ENCODE measurements at regions of chr5 and their contacts with region 1.

Region 1: DNA sequence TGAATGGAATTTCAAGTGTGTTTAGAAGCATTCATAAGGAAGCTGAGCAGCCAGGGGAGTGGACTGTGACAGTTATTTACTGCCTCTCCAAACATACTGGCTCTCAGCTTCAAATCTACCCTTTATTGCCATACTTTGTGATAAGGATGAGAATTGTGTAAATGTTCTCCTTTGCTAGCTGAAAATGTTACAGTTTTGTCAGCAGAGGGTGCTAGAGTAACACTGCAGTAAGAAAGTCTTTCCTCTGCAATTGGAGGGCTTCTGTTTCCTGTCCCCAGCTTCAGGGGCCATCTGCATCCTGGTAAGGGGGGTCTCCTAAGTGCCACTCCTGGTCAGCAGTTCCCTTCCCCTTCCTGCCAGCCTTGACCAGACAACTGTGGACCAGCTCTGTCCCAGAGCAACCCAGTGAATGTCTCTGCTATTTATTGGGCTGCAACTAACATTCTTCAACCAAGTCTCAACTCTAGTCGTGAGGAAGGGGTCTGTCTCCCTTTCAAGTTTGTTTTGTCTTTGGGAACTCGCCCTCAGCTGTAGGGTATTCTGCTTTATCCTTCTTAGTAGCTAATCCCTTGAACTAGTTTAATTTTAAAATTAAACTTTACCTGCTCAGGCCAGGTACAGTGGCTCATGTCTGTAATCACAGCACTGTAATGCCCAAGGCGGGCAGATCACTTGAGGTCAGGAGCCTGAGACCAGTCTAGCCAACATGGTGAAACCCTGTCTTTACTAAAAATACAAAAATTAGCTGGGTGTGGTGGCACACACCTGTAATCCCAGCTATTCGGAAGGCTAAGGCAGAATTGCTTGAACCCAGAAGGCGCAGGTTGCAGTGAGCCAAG is 45.3 kb downstream of the RAPGEF6 start:
- DNase-seq: peak; percentile 29 to 65 (median 42)
- ATAC-seq: peak; percentile 93
- H3K4me3 ChIP-seq: no peak overlapping the region
- H3K27ac ChIP-seq: no peak overlapping the region
- H3K4me1 ChIP-seq: no peaks in the 10 kb centered on the region; a peak in 2 of 5 replicates
- H3K27me3 ChIP-seq: no peaks in the 10 kb centered on the region
- CTCF ChIP-seq: peak; percentile 70 to 87 (median 84)
- EP300 ChIP-seq: no peak
- POLR2A ChIP-seq: no peak
- RAD21 ChIP-seq: peak; percentile 94 to 96

Region 2: GRCh38 chr5:131634996-131635754 is 45.4 kb after region 1 on chr5 and contains the start of gene RAPGEF6:
- CTCF ChIA-PET with region 1: no interaction called
- POLR2A ChIA-PET with region 1: no interaction called
- in situ Hi-C with region 1: no loop called
- intact Hi-C with region 1: loop called (anchors 2 kb)
- DNase-seq: peak; percentile 89 to 99 (median 90)
- ATAC-seq: peak; percentile 87
- H3K4me3 ChIP-seq: peak within 1 kb of the TSS; percentile 70
- H3K27ac ChIP-seq: peak within 1 kb of the TSS; percentile 99
- H3K4me1 ChIP-seq: peaks cover 18 to 52% of the 10 kb centered on the region in 2 experiments
- H3K27me3 ChIP-seq: no peaks in the 10 kb centered on the region
- CTCF ChIP-seq: peak; percentile 4 to 34 (median 21); a peak in 5 of 6 replicates
- EP300 ChIP-seq: peak; percentile 74
- POLR2A ChIP-seq: peak; percentile 93
- RAD21 ChIP-seq: no peak; a peak in 1 of 4 replicates
- polyA plus RNA-seq, gene RAPGEF6: 2.7 to 3.6 TPM

Region 3: DNA sequence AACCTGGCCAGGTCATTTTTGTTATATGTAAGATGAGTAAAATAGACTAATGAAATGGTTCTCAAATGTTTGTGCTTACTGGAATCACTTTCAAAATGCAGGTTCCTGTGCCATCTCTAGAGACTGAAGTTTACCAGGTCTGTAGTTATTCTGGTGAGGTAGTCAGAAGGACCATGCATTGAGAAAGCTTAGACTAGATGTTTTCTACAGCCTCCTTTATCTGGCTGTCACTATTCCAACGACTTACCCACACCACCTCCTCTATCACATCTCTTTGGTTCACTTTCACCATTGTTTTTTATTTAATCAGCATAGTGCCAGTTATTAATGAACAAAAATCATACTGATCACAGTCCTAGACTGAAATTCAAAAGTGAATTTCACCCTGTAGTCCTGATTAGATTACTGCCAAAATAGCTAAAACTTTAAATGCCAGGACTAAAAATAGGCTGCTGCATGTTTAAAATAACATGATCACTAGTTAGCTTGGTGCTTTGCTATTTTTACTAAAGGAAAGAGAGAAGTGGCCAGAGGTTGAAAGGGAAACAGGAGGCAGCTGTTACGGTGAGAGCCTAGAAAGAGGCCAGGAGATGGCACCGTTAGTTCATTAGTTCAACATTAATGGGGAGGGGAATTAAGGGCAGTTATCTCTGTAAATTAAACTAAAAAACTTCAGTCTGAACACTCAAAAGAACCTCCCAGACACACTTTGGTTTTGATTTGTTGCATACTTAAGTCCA is 221.0 kb after region 1 on chr5:
- CTCF ChIA-PET with region 1: no interaction called
- POLR2A ChIA-PET with region 1: no interaction called
- in situ Hi-C with region 1: no loop called
- intact Hi-C with region 1: loop called (anchors 5 kb)
- DNase-seq: peak in 2 of 4 experiments; percentile 25 to 33
- ATAC-seq: peak; percentile 71
- H3K4me3 ChIP-seq: no peak overlapping the region
- H3K27ac ChIP-seq: no peak overlapping the region
- H3K4me1 ChIP-seq: peaks cover 2 to 18% of the 10 kb centered on the region in 2 experiments; a peak in 2 of 5 replicates
- H3K27me3 ChIP-seq: no peaks in the 10 kb centered on the region
- CTCF ChIP-seq: peak; percentile 28 to 54 (median 34); a peak in 4 of 6 replicates
- EP300 ChIP-seq: no peak
- POLR2A ChIP-seq: no peak
- RAD21 ChIP-seq: peak; percentile 72 to 85

Measured in K562 (cell line).